ENCODE measurements at regions of chr16 and their contacts with region 1.

Region 1: DNA sequence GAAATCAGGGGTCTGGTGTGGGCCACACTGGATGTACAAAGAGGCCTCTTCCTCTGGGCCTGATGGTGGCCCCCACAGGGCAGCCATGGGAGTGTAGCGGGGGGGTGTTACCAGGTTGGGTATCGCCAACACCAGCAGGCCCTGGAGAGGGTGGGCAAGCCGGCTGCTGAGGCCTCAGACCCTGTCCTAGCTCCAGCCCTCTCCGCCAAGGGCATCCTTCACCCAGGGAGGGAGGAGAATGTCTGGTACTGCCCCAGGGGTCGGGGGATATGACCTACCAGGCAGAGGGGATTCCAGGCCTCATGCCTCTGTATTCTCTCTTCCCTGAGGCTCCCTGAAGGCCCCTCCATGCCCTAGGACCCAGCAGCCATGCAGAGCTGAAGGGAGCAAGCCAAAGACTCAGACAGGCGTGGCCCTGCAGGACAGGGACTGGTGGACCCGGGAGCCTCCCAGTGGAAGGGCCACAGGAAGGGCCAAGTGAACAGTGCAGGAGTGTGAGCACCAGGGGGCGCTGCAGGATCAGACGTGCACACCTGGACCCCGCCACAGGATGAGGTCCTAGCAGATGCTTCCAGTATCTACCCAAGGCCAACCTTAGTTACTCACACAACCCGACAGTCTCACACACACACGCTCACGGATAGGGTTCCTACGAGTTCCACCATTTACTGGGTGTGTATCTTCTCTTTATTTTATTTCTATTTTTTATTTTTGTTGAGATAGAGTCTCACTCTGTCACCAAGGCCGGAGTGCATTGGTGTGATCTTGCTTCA is 10.9 kb upstream of the CES4A start:
- DNase-seq: peak; percentile 96
- ATAC-seq: peak; percentile 96
- H3K4me3 Mint-ChIP-seq: no peak overlapping the region
- H3K27ac Mint-ChIP-seq: no peak overlapping the region
- H3K4me1 Mint-ChIP-seq: peaks cover 44% of the 10 kb centered on the region
- H3K27me3 Mint-ChIP-seq: peaks cover 4% of the 10 kb centered on the region
- CTCF ChIP-seq: peak; percentile 96

Region 2: DNA sequence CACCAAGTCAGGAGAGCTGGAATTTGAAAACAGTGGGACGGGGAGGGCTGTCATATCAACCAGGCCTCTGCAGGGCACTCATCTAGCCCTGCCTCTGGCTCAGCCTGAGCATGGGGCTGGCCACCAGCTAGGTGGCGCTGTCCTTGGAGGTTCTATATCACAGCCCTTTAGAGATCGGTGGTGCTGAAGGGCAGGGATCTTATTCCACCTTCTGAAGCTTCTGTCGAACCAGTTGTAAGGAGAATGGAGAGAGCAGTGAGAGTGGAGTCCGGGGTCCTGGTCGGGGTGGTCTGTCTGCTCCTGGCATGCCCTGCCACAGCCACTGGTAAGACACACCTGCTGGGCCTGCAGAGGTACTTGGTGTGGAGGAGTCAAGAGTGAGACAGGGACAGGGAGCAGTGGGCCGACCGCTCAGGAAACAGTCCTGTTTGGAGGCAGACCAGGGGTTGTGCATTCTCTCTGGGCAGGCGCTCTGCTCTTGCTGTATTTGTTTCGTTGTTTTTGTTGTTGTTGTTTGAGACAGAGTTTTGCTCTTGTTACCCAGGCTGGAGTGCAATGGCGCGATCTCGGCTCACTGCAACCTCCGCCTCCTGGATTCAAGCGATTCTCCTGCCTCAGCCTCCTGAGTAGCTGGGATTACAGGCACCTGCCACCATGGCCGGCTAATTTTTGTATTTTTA is 16.3 kb before region 1 on chr16 and contains the start of gene CES3:
- CTCF ChIA-PET with region 1: interaction called, 19 read pairs
- POLR2A ChIA-PET with region 1: interaction called, 3 read pairs
- intact Hi-C with region 1: no loop called
- DNase-seq: peak; percentile 84
- ATAC-seq: peak; percentile 94
- H3K4me3 Mint-ChIP-seq: peak within 1 kb of the TSS; percentile 24
- H3K27ac Mint-ChIP-seq: peak within 1 kb of the TSS; percentile 83
- H3K4me1 Mint-ChIP-seq: peaks cover 16% of the 10 kb centered on the region
- H3K27me3 Mint-ChIP-seq: peaks cover 4% of the 10 kb centered on the region
- CTCF ChIP-seq: peak; percentile 78
- total RNA-seq, gene CES3: 2.1 to 2.9 TPM

Region 3: GRCh38 chr16:67104061-67104460 is 126.5 kb after region 1 on chr16:
- CTCF ChIA-PET with region 1: interaction called, 21 read pairs
- POLR2A ChIA-PET with region 1: no interaction called
- intact Hi-C with region 1: loop called (anchors 5 kb)
- DNase-seq: peak; percentile 12
- ATAC-seq: peak; percentile 55
- H3K4me3 Mint-ChIP-seq: no peak overlapping the region
- H3K27ac Mint-ChIP-seq: no peak overlapping the region
- H3K4me1 Mint-ChIP-seq: no peaks in the 10 kb centered on the region
- H3K27me3 Mint-ChIP-seq: no peaks in the 10 kb centered on the region
- CTCF ChIP-seq: no peak

Region 4: DNA sequence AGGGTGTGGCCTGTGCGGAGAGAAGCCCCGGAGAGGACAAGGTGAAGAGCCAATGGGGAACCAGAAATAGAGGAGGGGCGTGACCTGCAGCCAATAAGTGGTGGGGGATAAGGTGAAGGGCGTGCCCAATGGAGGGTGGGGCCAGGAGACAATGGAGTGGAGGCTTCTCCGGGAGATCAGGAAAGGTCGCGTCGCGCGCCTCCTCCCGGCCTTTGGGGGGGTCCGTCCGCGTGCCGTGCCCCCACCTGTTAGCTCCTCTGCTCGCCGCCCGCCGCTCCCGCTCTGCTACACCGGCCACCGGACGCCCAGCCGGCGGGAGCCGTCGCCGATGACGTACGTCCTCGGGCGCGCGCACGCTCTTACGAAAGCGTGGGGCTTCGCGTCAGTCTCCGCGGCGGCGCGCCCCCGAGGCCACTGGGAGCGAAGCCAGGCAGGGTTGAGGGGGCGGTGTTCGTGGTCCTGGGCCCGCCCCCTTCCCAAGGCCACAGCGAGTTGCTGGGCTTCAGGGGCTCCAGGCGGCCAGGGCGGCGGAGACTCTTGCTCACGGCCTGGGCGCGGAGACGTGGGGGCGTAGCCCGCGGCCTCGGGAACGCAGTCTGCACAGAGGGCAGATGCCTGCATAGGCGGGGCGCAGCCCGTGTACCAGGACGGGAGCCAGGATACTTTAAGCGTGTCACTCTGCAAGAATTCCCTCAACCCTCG is 206.3 kb after region 1 on chr16 and contains the start of gene MATCAP1:
- CTCF ChIA-PET with region 1: interaction called, 15 read pairs
- POLR2A ChIA-PET with region 1: no interaction called
- intact Hi-C with region 1: loop called (anchors 10 kb)
- DNase-seq: peak; percentile 97
- ATAC-seq: peak; percentile 97
- H3K4me3 Mint-ChIP-seq: peak within 1 kb of the TSS; percentile 66
- H3K27ac Mint-ChIP-seq: no peak within 1 kb of the TSS
- H3K4me1 Mint-ChIP-seq: peaks cover 17% of the 10 kb centered on the region
- H3K27me3 Mint-ChIP-seq: peaks cover 21% of the 10 kb centered on the region
- CTCF ChIP-seq: no peak
- total RNA-seq, gene MATCAP1: 49.5 to 49.9 TPM

Measured in activated CD8-positive, alpha-beta T cell treated with anti-CD3 and anti-CD28 coated beads for 36 hours (primary cell).